Transverse colon (tissue), 4 donors: ENCODE measurements at regions of chr19 and their contacts with region 1.

Region 1: GRCh38 chr19:32273483-32273882 is 71.9 kb upstream of the ZNF507 start:
- DNase-seq: no peak
- H3K4me3 ChIP-seq: no peak overlapping the region
- H3K27ac ChIP-seq: no peak overlapping the region
- H3K4me1 ChIP-seq: no peaks in the 10 kb centered on the region
- H3K27me3 ChIP-seq: peaks cover 6% of the 10 kb centered on the region
- CTCF ChIP-seq: no peak
- EP300 ChIP-seq: no peak
- POLR2A ChIP-seq: no peak

Region 2: GRCh38 chr19:32336259-32337083 is 63.0 kb after region 1 on chr19:
- in situ Hi-C with region 1: no loop called
- intact Hi-C with region 1: loop called (anchors 2 kb)
- DNase-seq: no peak
- H3K4me3 ChIP-seq: peak overlapping the region in 1 of 4 donors; percentile 10
- H3K27ac ChIP-seq: peak overlapping the region; percentile 42 to 77 (median 60)
- H3K4me1 ChIP-seq: peaks cover 0 to 6% (median 0%) of the 10 kb centered on the region in 4 donors
- H3K27me3 ChIP-seq: no peaks in the 10 kb centered on the region
- CTCF ChIP-seq: peak in 1 of 5 experiments; percentile 2
- EP300 ChIP-seq: no peak
- POLR2A ChIP-seq: no peak

Region 3: DNA sequence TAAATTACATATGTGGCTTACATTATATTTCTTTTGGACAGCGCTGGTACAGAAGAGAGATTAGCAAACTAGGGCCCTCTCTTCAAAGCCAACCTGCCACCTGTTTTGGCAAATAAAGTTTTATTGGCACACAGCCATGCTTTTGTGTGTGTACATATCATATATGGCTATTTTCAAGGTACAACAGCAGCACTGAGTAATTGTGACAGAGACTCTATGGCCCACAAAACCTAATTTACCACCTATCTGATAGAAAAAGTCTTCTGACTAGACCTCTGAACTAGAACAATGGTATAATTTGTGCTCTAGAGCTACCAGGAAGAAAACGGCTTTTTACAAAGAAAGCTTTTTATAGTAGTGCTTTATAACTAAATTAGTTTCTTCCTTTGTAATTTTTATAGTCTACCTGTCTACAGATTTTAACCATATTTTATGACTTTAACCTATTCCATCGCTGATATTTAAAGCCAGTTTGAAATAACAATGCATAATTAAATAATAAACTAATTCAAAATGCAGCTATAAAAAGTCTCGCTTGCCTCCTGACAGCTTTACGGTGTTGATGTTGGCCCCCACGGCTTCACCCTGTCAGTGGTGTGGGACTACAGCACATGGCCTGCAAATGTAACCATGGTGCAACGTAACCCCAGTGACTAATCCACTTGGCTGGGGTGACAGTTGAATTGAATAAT is 114.4 kb after region 1 on chr19:
- in situ Hi-C with region 1: no loop called
- intact Hi-C with region 1: no loop called
- DNase-seq: peak; percentile 59
- H3K4me3 ChIP-seq: no peak overlapping the region
- H3K27ac ChIP-seq: peak overlapping the region in 3 of 4 donors; percentile 30 to 50 (median 45)
- H3K4me1 ChIP-seq: peaks cover 4 to 24% (median 8%) of the 10 kb centered on the region in 4 donors
- H3K27me3 ChIP-seq: no peaks in the 10 kb centered on the region
- CTCF ChIP-seq: no peak
- EP300 ChIP-seq: no peak
- POLR2A ChIP-seq: no peak